ENCODE measurements at regions of chr12 and their contacts with region 1.

Region 1: GRCh38 chr12:67534681-67535080 is 113.9 kb upstream of the DYRK2 start:
- DNase-seq: no peak
- H3K4me3 ChIP-seq: no peak overlapping the region
- H3K4me3 Mint-ChIP-seq: no peak overlapping the region
- H3K27ac ChIP-seq: no peak overlapping the region
- H3K27ac Mint-ChIP-seq: no peak overlapping the region
- H3K4me1 ChIP-seq: no peaks in the 10 kb centered on the region
- H3K4me1 Mint-ChIP-seq: peaks cover 0 to 11% (median 5%) of the 10 kb centered on the region in 4 donors
- H3K27me3 ChIP-seq: no peaks in the 10 kb centered on the region
- H3K27me3 Mint-ChIP-seq: no peaks in the 10 kb centered on the region

Region 2: DNA sequence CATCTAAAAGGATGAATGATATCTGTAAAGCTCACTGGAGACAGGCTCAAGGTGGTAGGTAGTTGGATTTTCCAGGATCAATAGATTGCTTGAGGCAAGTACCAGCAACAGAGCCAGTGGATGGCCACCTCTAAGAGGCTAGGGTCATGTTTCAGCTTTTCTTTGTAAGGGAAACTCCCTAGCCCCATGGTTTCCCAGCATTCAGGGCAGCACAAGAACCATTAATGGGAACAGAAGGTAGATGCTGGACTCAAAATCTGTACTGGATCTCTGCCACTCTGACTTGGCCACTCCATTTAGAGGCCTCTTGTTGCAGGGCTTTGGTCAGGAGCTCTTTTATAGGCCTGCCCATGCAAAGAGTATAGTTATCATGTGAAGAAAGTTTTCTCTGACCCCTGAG is 37.8 kb after region 1 on chr12:
- CTCF ChIA-PET with region 1: no interaction called
- POLR2A ChIA-PET with region 1: no interaction called
- intact Hi-C with region 1: loop called (anchors 5 kb)
- DNase-seq: no peak
- H3K4me3 ChIP-seq: no peak overlapping the region
- H3K4me3 Mint-ChIP-seq: no peak overlapping the region
- H3K27ac ChIP-seq: no peak overlapping the region
- H3K27ac Mint-ChIP-seq: no peak overlapping the region
- H3K4me1 ChIP-seq: peaks cover 2% of the 10 kb centered on the region
- H3K4me1 Mint-ChIP-seq: peaks cover 9 to 13% (median 11%) of the 10 kb centered on the region in 4 donors
- H3K27me3 ChIP-seq: no peaks in the 10 kb centered on the region
- H3K27me3 Mint-ChIP-seq: no peaks in the 10 kb centered on the region